ENCODE measurements at regions of chr5 and their contacts with region 1.

Region 1: DNA sequence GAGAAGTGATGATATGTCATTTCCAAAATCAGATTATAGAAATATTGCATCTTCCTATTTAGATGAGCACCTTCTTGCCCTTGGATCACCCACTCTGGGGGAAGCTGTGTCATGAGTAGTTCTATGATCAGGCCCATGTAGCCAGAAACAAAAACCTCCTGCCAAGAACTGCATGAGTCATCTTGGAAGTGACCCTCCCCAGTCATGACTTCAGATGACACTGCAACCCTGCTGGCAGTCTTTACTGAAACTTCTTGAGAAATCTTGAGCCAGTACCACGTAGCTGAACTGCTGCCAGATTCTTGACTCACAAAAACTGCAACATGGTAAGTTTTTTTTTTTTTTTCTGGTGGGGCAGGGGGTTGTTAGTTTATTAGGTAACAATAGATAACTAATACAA is 439.6 kb upstream of the PTGER4 start:
- DNase-seq: no peak
- ATAC-seq: no peak
- H3K4me3 ChIP-seq: no peak overlapping the region
- H3K4me3 Mint-ChIP-seq: no peak overlapping the region
- H3K27ac ChIP-seq: no peak overlapping the region
- H3K27ac Mint-ChIP-seq: no peak overlapping the region
- H3K4me1 ChIP-seq: no peaks in the 10 kb centered on the region
- H3K4me1 Mint-ChIP-seq: no peaks in the 10 kb centered on the region
- H3K27me3 ChIP-seq: no peaks in the 10 kb centered on the region
- H3K27me3 Mint-ChIP-seq: no peaks in the 10 kb centered on the region
- CTCF ChIP-seq: no peak

Region 2: DNA sequence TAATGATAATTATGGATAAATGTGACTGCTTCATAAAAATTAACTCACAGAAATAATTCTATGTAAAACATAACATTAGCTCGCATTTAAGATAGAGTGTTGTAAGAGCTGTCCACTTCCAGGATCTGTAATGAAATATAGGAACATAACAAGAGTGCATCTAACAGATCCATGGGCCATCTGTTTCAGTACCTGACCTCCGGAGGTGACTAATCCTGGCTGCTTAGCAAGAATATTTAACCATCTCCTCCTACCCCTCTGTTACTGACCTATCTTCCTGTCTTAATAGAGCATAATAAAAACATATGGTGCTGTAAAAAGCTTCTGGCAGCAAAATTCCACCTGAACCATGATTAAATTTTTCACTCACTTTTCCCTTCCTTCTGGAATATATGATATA is 1263.2 kb after region 1 on chr5:
- CTCF ChIA-PET with region 1: no interaction called
- POLR2A ChIA-PET with region 1: no interaction called
- intact Hi-C with region 1: loop called in 1 of 2 experiments (anchors 5 kb)
- DNase-seq: no peak
- ATAC-seq: no peak
- H3K4me3 ChIP-seq: no peak overlapping the region
- H3K4me3 Mint-ChIP-seq: no peak overlapping the region
- H3K27ac ChIP-seq: no peak overlapping the region
- H3K27ac Mint-ChIP-seq: no peak overlapping the region
- H3K4me1 ChIP-seq: no peaks in the 10 kb centered on the region
- H3K4me1 Mint-ChIP-seq: no peaks in the 10 kb centered on the region
- H3K27me3 ChIP-seq: no peaks in the 10 kb centered on the region
- H3K27me3 Mint-ChIP-seq: peaks cover 3% of the 10 kb centered on the region
- CTCF ChIP-seq: no peak